GM10248 (cell line): ENCODE measurements at regions of chr3 and their contacts with region 1.

Region 1: DNA sequence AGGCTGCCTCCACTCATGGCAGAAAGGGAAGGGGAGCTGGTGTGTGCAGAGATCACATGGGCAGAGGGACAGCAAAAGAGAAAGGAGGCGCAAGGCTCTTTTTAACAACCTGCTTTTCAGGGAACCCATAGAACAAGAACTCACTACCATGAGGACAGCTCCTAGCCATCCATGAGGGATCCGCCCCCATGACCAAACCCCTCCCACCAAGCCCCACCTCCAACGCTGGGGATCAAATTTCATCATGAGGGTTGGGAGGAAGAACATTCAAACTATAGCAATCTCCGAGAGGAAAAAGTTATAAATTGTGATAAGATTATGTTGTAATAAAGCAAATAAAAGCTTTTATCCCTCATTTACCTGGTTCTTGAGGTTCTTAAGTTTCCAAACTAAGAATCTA is 84.7 kb upstream of the LMCD1 start:
- DNase-seq: no peak
- CTCF ChIP-seq: no peak

Region 2: DNA sequence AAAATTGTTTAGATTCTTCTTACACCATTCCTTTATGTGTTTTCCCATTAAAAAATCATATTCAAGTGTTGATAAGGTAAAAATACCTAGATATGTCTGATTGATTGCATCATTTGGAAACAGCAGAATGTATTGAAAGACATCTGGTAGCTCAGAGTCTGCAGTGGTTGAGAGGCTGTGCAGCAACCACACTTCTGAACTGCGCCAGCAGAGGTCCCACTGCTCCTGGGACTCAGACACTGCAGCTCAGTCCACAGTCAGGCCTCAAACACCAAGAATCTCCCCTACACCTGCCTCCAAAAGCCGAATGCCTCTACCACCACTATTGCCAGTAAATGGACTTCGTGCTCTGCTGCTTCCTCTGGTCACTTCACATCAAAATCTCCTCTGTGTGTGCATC is 92.2 kb before region 1 on chr3:
- CTCF ChIA-PET with region 1: interaction called, 68 read pairs
- POLR2A ChIA-PET with region 1: no interaction called
- DNase-seq: peak; percentile 29
- CTCF ChIP-seq: peak; percentile 27

Region 3: DNA sequence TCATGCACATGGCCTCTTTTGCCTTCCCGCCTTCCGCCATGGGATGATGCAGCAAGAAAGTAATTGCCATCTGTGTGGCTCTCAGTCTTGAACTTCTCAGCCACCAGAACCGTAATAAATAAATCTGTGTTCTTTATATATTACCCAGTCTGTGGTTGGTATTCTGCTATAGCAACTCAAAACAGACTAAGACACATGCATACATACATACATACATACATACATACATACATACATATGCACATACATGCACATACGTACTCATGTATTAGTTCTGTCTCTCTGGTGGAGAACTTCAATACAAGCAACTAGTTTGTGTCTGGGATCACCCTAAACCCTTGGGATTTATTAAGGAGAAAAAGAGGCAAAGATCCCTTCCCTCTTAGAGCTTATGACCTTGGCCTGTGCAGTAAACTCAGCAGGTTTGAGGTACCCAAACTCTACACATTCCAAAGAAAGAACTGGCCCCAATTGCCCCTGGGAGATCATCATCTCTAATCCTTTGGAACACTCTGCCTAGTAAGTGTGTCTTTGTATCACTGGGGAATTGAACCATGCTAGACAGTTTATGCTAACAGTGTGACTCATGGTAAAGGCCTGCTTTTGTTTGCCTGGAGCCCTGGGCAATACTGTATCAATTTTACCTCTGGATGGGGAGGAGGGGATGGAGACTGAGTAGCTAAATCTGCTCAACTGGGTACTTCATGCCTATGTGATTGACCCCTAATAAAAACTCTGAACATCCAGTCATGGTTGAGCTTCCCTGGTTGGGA is 30.9 kb before region 1 on chr3:
- CTCF ChIA-PET with region 1: interaction called, 11 read pairs
- POLR2A ChIA-PET with region 1: no interaction called
- DNase-seq: no peak
- CTCF ChIP-seq: no peak

Region 4: DNA sequence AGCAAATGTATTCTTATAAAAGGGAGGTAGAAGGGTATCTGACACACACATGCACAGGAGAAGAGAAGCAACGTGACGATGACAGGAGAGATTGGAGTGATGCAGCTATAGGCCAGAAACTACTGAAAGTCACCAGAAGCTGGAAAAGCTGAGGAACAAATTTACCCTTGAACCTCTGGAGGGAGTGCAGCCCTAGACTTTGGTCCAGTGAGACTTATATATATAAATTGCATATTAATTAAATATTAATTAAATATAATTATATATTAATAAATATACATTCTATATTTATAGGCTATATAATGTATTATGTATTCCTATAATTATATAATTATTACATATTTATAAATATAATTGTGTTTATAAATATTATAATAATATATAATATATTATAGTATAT is 11.8 kb before region 1 on chr3:
- CTCF ChIA-PET with region 1: interaction called, 56 read pairs
- POLR2A ChIA-PET with region 1: no interaction called
- DNase-seq: no peak
- CTCF ChIP-seq: no peak

Region 5: GRCh38 chr3:8436718-8437184 is 19.8 kb after region 1 on chr3:
- CTCF ChIA-PET with region 1: interaction called, 27 read pairs
- POLR2A ChIA-PET with region 1: no interaction called
- DNase-seq: no peak
- CTCF ChIP-seq: no peak

Region 6: DNA sequence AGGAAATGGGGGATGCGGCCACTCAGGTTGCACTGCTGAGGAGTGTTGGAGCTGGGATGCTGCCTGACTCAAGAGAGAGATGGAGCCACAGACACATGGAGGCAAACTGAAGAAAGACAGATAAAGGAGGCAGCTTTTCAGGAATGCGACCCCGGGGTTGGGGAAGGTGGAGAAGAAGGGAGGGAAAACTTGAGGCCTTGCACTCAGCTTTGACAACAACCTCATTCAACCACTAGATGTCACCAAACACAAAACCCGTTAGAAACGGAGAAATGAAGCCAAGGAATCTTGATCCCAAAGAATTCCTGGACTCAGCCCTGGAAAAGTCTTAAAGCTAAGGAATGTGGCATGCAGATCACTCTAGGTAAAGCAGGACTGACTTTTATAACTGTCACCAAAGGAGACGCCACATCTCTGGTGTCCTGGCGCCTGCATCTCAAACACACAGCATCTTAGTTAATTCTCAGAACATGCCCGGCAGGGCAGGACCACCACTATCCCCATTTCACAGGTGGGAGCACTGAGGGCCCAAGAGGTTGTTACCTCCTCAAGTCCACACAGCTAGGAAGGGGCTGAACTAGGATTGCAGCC is 25.1 kb after region 1 on chr3:
- CTCF ChIA-PET with region 1: interaction called, 15 read pairs
- POLR2A ChIA-PET with region 1: no interaction called
- DNase-seq: peak; percentile 35
- CTCF ChIP-seq: peak; percentile 56